ENCODE measurements at regions of chr7 and their contacts with region 1.

Region 1: DNA sequence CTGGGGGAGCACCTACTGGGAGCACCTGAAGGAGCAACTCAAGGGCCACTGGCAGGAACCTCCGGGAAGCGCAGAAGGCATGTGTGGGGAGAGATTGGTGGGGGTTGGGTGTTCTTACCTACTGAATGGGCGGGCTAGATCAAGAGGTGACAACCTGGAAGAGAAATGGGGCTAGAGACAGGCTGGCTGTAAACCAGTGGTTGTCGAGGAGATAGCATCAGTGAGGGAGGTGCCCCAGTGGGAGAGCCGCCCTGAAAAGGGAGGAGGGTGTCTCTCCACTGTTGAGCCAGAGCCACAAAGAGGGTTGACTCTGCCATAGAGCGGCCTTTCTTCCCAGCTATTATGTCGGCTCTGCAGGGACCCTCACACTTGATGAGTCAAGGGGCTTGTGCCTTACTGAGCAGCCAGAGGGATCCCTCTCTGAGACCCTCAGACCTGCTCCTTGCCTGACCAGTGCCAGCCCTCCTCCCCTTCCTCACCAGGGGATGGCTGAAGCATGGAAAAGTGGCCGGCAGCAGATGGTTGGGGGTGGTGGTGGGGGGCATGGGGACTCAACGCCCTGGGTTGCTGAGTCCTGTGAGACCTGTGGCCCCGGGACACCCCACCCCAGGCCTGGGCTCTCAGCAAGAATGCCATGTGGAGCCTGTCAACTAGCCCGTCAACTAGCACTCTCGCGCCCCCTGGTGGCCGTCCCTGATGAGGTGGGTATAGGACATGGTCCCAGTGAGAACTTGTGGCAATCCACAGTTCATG is 36.5 kb upstream of the PURB start:
- DNase-seq: peak; percentile 91 to 97 (median 96)
- ATAC-seq: peak; percentile 95 to 97
- H3K4me3 ChIP-seq: no peak overlapping the region
- H3K27ac ChIP-seq: no peak overlapping the region
- H3K4me1 ChIP-seq: no peaks in the 10 kb centered on the region
- H3K27me3 ChIP-seq: no peaks in the 10 kb centered on the region

Region 2: GRCh38 chr7:44581879-44582603 is 339.7 kb before region 1 on chr7 and contains the start of gene TMED4:
- intact Hi-C with region 1: loop called (anchors 5 to 10 kb)
- DNase-seq: peak; percentile 100
- ATAC-seq: peak; percentile 98 to 99
- H3K4me3 ChIP-seq: peak within 1 kb of the TSS; percentile 65
- H3K27ac ChIP-seq: peak within 1 kb of the TSS; percentile 94
- H3K4me1 ChIP-seq: peaks cover 2% of the 10 kb centered on the region
- H3K27me3 ChIP-seq: no peaks in the 10 kb centered on the region
- total RNA-seq, gene TMED4: 63.2 to 75.2 (median 66.6) TPM

Region 3: DNA sequence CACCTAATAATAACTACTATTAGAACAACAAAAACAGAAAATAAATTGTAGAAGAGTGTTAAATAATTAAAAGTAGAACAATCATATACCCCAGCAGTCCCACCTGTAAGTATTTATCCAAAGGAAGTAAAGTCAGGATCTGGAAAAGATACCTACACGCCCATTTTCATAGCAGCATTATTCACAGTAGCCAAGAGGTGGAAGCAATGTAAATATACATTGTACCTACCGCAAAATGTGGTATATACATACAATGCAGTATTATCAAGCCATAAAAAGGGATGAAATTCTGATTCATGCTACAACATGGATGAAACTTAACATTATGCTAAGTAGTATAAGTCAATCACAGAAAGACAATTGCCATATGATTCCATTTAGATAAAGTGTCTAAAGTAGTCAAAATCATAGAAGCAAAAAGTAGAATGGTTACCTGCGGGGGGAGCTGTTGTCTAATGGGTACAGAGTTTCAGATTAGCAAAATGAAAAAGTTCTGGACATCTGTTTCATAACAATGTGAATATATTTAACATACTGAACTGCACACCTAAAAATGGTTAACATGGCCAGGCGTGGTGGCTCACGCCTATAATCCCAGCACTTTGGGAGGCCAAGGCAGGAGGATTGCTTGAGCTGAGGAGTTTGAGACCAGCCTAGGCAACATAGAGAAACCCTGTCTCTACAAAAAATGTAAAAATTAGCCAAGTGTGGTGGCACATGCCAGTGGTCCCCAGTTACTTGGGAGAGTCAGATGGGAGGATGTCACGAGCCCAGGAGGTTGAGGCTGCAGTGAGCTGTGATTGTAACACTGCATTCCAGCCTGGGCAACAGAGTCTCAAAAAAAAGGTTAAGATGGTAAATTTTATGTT is 333.7 kb before region 1 on chr7:
- intact Hi-C with region 1: loop called (anchors 5 to 10 kb)
- DNase-seq: no peak
- ATAC-seq: peak in 1 of 2 donors; percentile 66
- H3K4me3 ChIP-seq: no peak overlapping the region
- H3K27ac ChIP-seq: no peak overlapping the region
- H3K4me1 ChIP-seq: peaks cover 2% of the 10 kb centered on the region
- H3K27me3 ChIP-seq: no peaks in the 10 kb centered on the region

Region 4: DNA sequence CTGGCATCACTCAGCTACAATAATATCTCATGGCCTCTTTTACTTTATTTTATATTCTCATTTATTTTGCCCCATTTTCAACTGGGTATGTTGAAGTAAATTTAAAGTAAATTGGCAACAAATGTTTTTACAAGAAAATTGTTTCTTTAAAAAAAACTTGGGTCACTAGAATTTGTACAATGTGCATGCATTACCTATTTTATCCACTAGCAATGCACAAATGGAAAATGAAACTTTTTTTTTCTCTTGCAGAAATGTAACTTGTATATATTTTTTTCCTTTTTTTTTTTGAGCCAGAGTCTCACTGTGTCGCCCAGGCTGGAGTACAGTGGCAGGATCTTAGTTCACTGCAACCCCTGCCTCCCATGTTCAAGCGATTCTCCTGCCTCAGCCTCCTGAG is 63.6 kb before region 1 on chr7:
- intact Hi-C with region 1: loop called (anchors 2 to 10 kb)
- DNase-seq: no peak
- ATAC-seq: no peak
- H3K4me3 ChIP-seq: no peak overlapping the region
- H3K27ac ChIP-seq: no peak overlapping the region
- H3K4me1 ChIP-seq: no peaks in the 10 kb centered on the region
- H3K27me3 ChIP-seq: no peaks in the 10 kb centered on the region

Measured in right cardiac atrium (tissue), 5 donors.